ENCODE measurements at regions of chr7 and their contacts with region 1.

Region 1: GRCh38 chr7:73565675-73566340 is 8.3 kb upstream of the BCL7B start:
- DNase-seq: peak in 1 of 9 experiments; percentile 37
- ATAC-seq: no peak
- H3K4me3 ChIP-seq: peak overlapping the region; percentile 18 to 49
- H3K4me3 Mint-ChIP-seq: peak overlapping the region; percentile 85
- H3K27ac ChIP-seq: peak overlapping the region in 1 of 2 experiments; percentile 44
- H3K27ac Mint-ChIP-seq: peak overlapping the region; percentile 83
- H3K4me1 ChIP-seq: peaks cover 11% of the 10 kb centered on the region
- H3K4me1 Mint-ChIP-seq: peaks cover 33% of the 10 kb centered on the region
- H3K27me3 ChIP-seq: no peaks in the 10 kb centered on the region
- H3K27me3 Mint-ChIP-seq: no peaks in the 10 kb centered on the region
- CTCF ChIP-seq: no peak

Region 2: DNA sequence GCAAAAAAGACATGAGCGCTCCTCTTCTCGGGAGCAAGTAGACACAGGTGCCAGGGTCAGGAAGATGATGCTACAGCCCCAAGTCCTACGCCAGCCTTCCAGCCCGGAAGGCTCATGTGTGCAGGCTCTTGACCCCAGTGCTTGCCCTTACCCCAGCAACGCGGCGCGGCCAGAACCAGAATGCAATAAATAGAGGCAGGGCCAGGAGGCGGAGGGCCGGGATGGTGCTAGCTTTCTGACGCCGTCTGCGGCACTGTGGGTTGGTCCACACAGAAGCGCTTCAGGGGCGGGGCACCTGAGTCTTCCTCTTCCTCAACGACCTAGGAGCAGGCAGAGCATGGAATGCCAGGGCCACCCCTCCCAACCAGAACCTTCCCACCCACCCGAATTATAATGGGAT is 28.7 kb before region 1 on chr7:
- CTCF ChIA-PET with region 1: no interaction called
- POLR2A ChIA-PET with region 1: no interaction called
- intact Hi-C with region 1: loop called in 1 of 2 experiments (anchors 2 kb)
- DNase-seq: no peak
- ATAC-seq: no peak
- H3K4me3 ChIP-seq: no peak overlapping the region
- H3K4me3 Mint-ChIP-seq: no peak overlapping the region
- H3K27ac ChIP-seq: no peak overlapping the region
- H3K27ac Mint-ChIP-seq: no peak overlapping the region
- H3K4me1 ChIP-seq: no peaks in the 10 kb centered on the region
- H3K4me1 Mint-ChIP-seq: peaks cover 4% of the 10 kb centered on the region
- H3K27me3 ChIP-seq: no peaks in the 10 kb centered on the region
- H3K27me3 Mint-ChIP-seq: no peaks in the 10 kb centered on the region
- CTCF ChIP-seq: no peak